ENCODE measurements at regions of chr15 and their contacts with region 1.

Region 1: GRCh38 chr15:91302588-91303439 is 202.8 kb downstream of the SV2B start:
- DNase-seq: peak in 4 of 9 experiments; percentile 33 to 74 (median 60)
- ATAC-seq: peak; percentile 48
- H3K4me3 ChIP-seq: no peak overlapping the region
- H3K4me3 Mint-ChIP-seq: no peak overlapping the region
- H3K27ac ChIP-seq: no peak overlapping the region
- H3K27ac Mint-ChIP-seq: no peak overlapping the region
- H3K4me1 ChIP-seq: peaks cover 26% of the 10 kb centered on the region
- H3K4me1 Mint-ChIP-seq: peaks cover 27% of the 10 kb centered on the region
- H3K27me3 ChIP-seq: peaks cover 0 to 2% of the 10 kb centered on the region in 2 experiments
- H3K27me3 Mint-ChIP-seq: peaks cover 11% of the 10 kb centered on the region
- CTCF ChIP-seq: peak; percentile 87

Region 2: DNA sequence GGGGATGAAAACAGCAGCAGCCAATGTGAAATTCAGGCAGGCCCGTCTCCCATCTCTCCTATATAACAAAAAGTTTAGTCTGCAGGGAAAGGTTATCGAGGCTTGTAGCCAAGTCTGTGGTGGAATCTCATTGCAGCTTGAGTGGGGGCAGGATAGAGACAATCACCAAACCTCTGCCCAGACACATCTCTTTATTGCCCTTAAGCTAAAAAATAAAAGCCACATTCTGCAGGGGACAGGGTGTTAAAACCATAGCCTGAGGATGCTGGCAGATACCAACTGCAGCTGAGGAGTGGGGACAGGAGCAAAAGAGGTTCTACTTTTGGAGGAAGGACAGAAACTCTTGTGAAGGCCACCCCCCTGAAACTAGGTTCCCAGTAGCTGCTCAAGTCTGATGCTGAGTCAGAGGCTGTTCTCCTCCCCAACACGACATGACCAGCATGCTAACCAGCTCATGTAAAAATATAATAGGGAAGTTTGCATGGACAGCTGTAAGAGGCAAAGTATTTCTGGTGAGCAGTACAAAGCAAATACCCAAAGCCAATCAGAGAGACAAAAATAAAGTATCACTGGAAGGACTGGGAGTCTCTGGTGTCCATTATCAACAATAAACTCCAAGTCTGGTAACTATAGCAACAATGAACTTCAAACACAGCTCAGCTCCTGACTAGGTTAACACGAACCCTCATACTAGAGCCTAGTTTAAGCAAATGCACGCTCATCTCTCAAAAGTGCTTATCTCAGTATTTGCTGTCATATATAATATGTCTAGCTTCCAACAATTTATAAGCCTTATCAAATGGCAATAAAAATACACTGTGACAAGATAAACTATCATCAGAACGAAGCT is 188.5 kb after region 1 on chr15:
- CTCF ChIA-PET with region 1: no interaction called
- POLR2A ChIA-PET with region 1: no interaction called
- intact Hi-C with region 1: loop called in 1 of 2 experiments (anchors 10 kb)
- DNase-seq: peak in 2 of 9 experiments; percentile 50 to 63
- ATAC-seq: no peak
- H3K4me3 ChIP-seq: no peak overlapping the region
- H3K4me3 Mint-ChIP-seq: no peak overlapping the region
- H3K27ac ChIP-seq: peak overlapping the region in 1 of 2 experiments; percentile 40
- H3K27ac Mint-ChIP-seq: no peak overlapping the region
- H3K4me1 ChIP-seq: no peaks in the 10 kb centered on the region
- H3K4me1 Mint-ChIP-seq: no peaks in the 10 kb centered on the region
- H3K27me3 ChIP-seq: no peaks in the 10 kb centered on the region
- H3K27me3 Mint-ChIP-seq: no peaks in the 10 kb centered on the region
- CTCF ChIP-seq: no peak

Region 3: GRCh38 chr15:91603384-91604080 is 300.7 kb after region 1 on chr15:
- CTCF ChIA-PET with region 1: no interaction called
- POLR2A ChIA-PET with region 1: no interaction called
- intact Hi-C with region 1: loop called in 1 of 2 experiments (anchors 10 kb)
- DNase-seq: no peak
- ATAC-seq: no peak
- H3K4me3 ChIP-seq: no peak overlapping the region
- H3K4me3 Mint-ChIP-seq: no peak overlapping the region
- H3K27ac ChIP-seq: no peak overlapping the region
- H3K27ac Mint-ChIP-seq: no peak overlapping the region
- H3K4me1 ChIP-seq: no peaks in the 10 kb centered on the region
- H3K4me1 Mint-ChIP-seq: no peaks in the 10 kb centered on the region
- H3K27me3 ChIP-seq: no peaks in the 10 kb centered on the region
- H3K27me3 Mint-ChIP-seq: peaks cover 2% of the 10 kb centered on the region
- CTCF ChIP-seq: no peak

Region 4: GRCh38 chr15:91942676-91943576 is 640.1 kb after region 1 on chr15:
- CTCF ChIA-PET with region 1: interaction called, 13 read pairs
- POLR2A ChIA-PET with region 1: no interaction called
- intact Hi-C with region 1: loop called (anchors 1 to 2 kb)
- DNase-seq: peak in 6 of 9 experiments; percentile 11 to 72 (median 37)
- ATAC-seq: peak; percentile 71
- H3K4me3 ChIP-seq: no peak overlapping the region
- H3K4me3 Mint-ChIP-seq: peak overlapping the region; percentile 1
- H3K27ac ChIP-seq: no peak overlapping the region
- H3K27ac Mint-ChIP-seq: peak overlapping the region; percentile 43
- H3K4me1 ChIP-seq: no peaks in the 10 kb centered on the region
- H3K4me1 Mint-ChIP-seq: peaks cover 32% of the 10 kb centered on the region
- H3K27me3 ChIP-seq: no peaks in the 10 kb centered on the region
- H3K27me3 Mint-ChIP-seq: no peaks in the 10 kb centered on the region
- CTCF ChIP-seq: no peak

Region 5: GRCh38 chr15:92714477-92715401 is 1411.9 kb after region 1 on chr15:
- CTCF ChIA-PET with region 1: no interaction called
- POLR2A ChIA-PET with region 1: no interaction called
- intact Hi-C with region 1: loop called in 1 of 2 experiments (anchors 2 kb)
- DNase-seq: peak; percentile 58 to 83 (median 77)
- ATAC-seq: peak; percentile 93
- H3K4me3 ChIP-seq: peak overlapping the region; percentile 46 to 60
- H3K4me3 Mint-ChIP-seq: peak overlapping the region; percentile 79
- H3K27ac ChIP-seq: no peak overlapping the region
- H3K27ac Mint-ChIP-seq: no peak overlapping the region
- H3K4me1 ChIP-seq: peaks cover 9% of the 10 kb centered on the region
- H3K4me1 Mint-ChIP-seq: peaks cover 9% of the 10 kb centered on the region
- H3K27me3 ChIP-seq: no peaks in the 10 kb centered on the region
- H3K27me3 Mint-ChIP-seq: peaks cover 23% of the 10 kb centered on the region
- CTCF ChIP-seq: peak; percentile 88